Thyroid gland (tissue), 4 donors: ENCODE measurements at regions of chr1 and their contacts with region 1.

Region 1: GRCh38 chr1:180627411-180627810 is 4.4 kb upstream of the XPR1 start:
- DNase-seq: no peak
- H3K4me3 ChIP-seq: no peak overlapping the region
- H3K27ac ChIP-seq: no peak overlapping the region
- H3K4me1 ChIP-seq: peaks cover 6 to 11% of the 10 kb centered on the region in 2 donors
- H3K27me3 ChIP-seq: no peaks in the 10 kb centered on the region
- CTCF ChIP-seq: no peak
- POLR2A ChIP-seq: no peak

Region 2: DNA sequence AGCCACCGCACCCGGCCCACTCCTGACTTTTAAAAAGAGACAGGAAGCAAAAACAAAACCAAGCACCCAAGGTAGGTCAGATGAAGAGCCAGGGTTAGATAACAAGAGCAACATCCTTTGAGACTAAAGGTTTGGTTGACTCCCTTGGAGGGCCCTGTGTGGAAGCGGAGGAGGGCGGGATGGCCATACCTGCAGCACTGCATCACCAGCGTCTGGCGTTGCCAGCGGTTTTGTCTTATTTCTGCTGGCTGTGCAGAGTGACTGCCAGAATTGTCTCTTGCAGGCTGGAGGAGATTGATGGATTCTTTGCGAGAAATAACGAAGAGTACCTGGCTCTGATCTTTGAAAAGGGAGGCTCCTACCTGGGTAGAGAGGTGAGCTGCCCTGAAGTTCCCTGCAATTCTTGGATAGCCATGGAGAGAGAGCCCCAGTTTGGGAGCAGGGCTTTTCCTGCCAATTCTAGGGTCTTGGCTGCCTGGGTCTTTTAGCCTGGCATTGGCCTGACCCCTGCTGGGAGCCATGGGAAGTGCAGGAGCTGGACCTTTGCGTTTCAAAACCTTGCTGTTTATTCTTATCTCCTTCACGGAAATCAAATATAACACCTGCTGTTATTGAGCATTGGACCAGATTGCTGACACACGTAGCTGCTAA is 448.8 kb before region 1 on chr1:
- intact Hi-C with region 1: no loop called
- DNase-seq: peak; percentile 51 to 66
- H3K4me3 ChIP-seq: no peak overlapping the region
- H3K27ac ChIP-seq: no peak overlapping the region
- H3K4me1 ChIP-seq: peaks cover 7 to 11% of the 10 kb centered on the region in 2 donors
- H3K27me3 ChIP-seq: no peaks in the 10 kb centered on the region
- CTCF ChIP-seq: peak; percentile 75 to 95 (median 82)
- POLR2A ChIP-seq: no peak

Region 3: DNA sequence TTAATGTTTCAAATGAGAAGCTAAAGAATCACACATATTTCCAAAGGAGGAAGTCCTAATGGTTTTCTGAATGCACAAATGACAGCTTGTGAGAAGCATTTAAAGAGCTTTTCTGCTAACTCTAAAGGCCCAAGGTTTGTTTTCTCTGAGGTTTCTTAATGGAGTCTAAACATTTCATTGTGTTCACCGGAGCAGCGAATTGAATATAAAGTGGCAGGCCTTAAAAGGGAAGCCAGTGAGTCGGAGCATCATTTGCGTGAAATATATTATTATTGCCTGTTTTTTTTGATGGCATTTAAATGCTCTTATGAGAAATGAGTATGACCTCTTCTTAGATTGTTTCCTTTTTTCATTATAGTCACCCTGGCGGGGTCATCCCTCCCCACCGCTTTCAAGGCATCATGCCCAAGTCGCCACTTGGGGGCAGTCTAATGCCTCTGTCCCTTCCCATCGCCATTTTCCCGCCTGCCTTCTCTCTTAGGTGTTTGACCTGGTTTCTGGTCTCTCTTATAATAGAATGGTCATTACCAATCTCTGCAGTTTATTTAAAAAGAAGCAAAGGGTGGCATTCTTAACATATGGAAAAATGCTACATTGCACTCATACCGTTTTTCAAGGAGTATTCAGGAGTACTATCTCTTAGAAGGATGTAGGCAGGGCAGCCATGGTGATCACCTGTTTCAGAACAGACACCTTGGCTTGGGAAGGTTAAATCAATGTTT is 94.0 kb before region 1 on chr1:
- intact Hi-C with region 1: loop called (anchors 5 kb)
- DNase-seq: peak; percentile 76 to 86
- H3K4me3 ChIP-seq: no peak overlapping the region
- H3K27ac ChIP-seq: peak overlapping the region in 2 of 3 donors; percentile 11 to 33
- H3K4me1 ChIP-seq: peaks cover 4 to 14% of the 10 kb centered on the region in 2 donors
- H3K27me3 ChIP-seq: no peaks in the 10 kb centered on the region
- CTCF ChIP-seq: peak; percentile 46 to 95 (median 84)
- POLR2A ChIP-seq: no peak

Region 4: GRCh38 chr1:181219938-181220337 is 592.5 kb after region 1 on chr1:
- intact Hi-C with region 1: no loop called
- DNase-seq: no peak
- H3K4me3 ChIP-seq: no peak overlapping the region
- H3K27ac ChIP-seq: no peak overlapping the region
- H3K4me1 ChIP-seq: peaks cover 0 to 3% of the 10 kb centered on the region in 2 donors
- H3K27me3 ChIP-seq: no peaks in the 10 kb centered on the region
- CTCF ChIP-seq: no peak
- POLR2A ChIP-seq: no peak